Heart left ventricle (tissue), 16 donors: ENCODE measurements at regions of chr12 and their contacts with region 1.

Region 1: DNA sequence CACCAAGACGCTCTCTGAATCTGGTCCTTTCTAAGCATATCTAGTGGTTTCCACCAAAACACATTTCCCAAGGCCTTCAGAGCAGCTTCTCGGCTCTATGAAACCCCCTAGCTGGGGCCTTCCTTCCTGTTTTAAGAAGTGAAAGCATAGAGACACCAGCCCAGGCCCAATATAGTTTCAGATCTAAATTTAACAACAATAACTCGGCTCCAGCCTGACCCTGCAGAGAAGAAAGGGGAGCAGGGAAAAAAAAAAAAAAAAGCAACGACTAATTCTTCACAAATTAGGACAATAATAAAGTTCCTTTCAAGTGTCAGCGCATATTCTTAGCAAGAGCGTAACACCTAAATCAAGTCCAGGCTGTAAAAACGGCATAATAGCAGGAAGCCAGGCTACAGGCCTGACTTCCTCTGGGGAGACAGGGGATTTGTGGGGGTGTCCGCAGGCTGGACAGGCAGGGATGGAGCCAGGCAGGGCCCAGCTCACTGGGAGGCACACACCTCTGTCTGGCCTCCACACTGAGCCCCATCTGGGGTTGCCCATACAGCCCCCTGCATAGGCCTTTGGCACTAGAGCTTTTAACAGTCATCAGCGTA is 773.1 kb downstream of the MED13L start:
- DNase-seq: peak in 4 of 5 donors; percentile 34 to 55 (median 46)
- ATAC-seq: peak; percentile 36 to 82 (median 64)
- H3K4me3 ChIP-seq: no peak overlapping the region
- H3K27ac ChIP-seq: peak overlapping the region in 11 of 12 donors; percentile 41 to 84 (median 71)
- H3K4me1 ChIP-seq: peaks cover 0 to 48% (median 25%) of the 10 kb centered on the region in 12 donors
- H3K27me3 ChIP-seq: no peaks in the 10 kb centered on the region
- CTCF ChIP-seq: peak in 1 of 12 donors; percentile 21
- POLR2A ChIP-seq: no peak

Region 2: GRCh38 chr12:115437061-115437567 is 67.3 kb before region 1 on chr12:
- intact Hi-C with region 1: loop called in 2 of 10 experiments (anchors 5 kb)
- DNase-seq: peak in 4 of 5 donors; percentile 34 to 74 (median 67)
- ATAC-seq: peak in 3 of 4 donors; percentile 53 to 69 (median 64)
- H3K4me3 ChIP-seq: no peak overlapping the region
- H3K27ac ChIP-seq: peak overlapping the region in 10 of 12 donors; percentile 0 to 69 (median 40)
- H3K4me1 ChIP-seq: peaks cover 0 to 31% (median 10%) of the 10 kb centered on the region in 12 donors
- H3K27me3 ChIP-seq: no peaks in the 10 kb centered on the region
- CTCF ChIP-seq: no peak
- POLR2A ChIP-seq: no peak

Region 3: DNA sequence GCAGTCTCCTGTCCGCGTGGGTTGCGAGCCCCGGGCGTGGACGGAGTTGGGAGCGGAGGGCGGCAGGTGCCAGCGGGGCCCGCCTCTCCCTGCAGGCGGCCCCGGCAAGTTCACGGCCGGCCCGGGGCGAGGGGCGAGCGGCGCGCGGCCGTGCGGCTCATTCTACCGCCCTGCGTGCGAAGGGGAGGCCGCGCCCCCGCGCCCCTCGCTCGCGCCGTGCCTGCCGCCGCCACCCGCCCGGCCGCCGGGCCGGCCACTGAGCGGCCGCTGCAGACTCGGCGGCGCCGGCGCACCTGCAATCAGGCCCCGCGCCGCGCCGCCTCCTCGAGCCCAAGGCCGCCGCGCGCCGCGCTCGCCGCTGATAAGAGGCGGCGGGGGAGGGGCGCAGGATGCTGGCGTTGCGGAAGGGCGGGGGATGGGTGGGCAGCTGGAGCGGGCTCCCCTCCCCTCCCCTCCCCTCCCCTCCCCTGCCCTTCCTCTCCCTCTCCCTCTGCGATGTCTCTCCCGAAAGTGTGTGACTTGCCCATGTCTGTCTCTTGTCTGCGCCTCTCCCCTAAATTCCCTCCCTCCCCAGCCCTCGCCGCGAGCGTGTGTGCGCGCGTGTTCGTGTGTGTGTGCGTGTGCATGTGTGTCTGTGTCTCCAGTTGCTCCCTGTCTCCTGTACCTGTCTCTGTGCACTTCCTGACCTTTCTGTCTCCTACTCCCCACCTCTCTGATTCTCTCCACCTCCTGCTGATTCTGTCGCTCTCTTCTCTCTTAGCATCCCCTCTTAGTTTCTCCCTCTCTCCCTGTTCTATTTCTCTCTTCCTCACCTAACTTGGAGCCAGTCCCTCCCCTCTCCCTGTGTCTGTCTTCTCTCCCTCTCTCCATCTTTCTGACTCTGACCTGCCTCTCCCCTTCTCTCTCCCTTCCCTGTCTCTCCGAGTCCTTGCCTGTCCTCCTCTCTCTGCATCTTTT is 52.3 kb before region 1 on chr12:
- intact Hi-C with region 1: loop called in 3 of 10 experiments (anchors 5 kb)
- DNase-seq: peak; percentile 61 to 71 (median 70)
- ATAC-seq: peak in 3 of 4 donors; percentile 65 to 78 (median 73)
- H3K4me3 ChIP-seq: peak overlapping the region in 10 of 12 donors; percentile 21 to 54 (median 38)
- H3K27ac ChIP-seq: peak overlapping the region in 9 of 12 donors; percentile 16 to 85 (median 66)
- H3K4me1 ChIP-seq: peaks cover 0 to 30% (median 8%) of the 10 kb centered on the region in 12 donors
- H3K27me3 ChIP-seq: peaks cover 0 to 13% (median 0%) of the 10 kb centered on the region in 9 donors
- CTCF ChIP-seq: no peak
- POLR2A ChIP-seq: no peak

Region 4: DNA sequence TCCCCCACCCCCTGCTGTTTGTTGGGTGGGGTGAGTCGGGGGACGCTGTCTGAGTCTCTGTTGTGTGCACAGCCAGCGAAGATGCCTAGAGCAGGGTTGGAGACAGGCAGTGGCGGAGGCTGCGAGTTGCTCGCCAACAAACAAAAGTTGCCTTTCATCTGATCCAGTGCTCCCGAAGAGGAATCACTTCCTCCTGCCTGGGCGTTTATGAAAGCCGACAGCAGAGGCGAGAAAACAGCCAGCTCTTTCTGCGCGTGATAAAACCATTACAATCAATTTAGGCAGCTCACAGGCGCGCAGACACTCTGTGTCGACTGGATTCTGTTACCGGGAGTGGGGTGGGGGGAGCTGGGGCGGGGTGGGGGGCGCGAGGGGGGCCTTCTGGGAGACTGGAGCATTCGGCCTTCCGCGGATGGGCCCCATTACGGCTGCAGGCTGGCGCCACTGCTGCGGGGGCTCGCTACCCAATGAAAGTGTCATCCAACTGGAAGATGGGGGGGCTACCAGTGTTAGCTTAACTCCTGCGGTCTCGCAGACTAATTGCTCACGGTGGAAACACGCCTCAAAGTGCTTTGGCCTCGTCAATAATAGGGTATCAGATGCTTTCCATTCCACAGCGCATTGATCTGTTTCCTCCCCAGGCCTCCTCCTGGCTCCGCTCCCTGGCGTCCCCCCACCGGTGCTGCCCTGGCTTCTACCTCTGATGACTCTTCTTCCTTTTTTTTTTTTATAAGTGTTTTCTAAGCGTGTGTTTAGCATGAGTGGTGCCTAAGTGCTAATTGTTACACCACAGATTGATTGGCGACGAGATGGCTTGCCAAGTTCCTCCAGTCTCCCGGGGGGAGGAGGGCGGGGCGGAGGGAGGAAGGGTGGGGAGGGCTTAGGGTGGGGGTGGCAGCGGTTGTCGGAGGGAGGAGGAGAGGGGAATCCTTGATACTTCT is 94.7 kb after region 1 on chr12:
- intact Hi-C with region 1: loop called in 3 of 10 experiments (anchors 2 to 10 kb)
- DNase-seq: peak; percentile 36 to 67 (median 63)
- ATAC-seq: peak; percentile 42 to 88 (median 60)
- H3K4me3 ChIP-seq: peak overlapping the region in 6 of 12 donors; percentile 10 to 32 (median 26)
- H3K27ac ChIP-seq: peak overlapping the region in 10 of 12 donors; percentile 26 to 68 (median 48)
- H3K4me1 ChIP-seq: peaks cover 0 to 18% (median 7%) of the 10 kb centered on the region in 12 donors
- H3K27me3 ChIP-seq: peaks cover 0 to 25% (median 4%) of the 10 kb centered on the region in 9 donors
- CTCF ChIP-seq: no peak
- POLR2A ChIP-seq: no peak

Region 5: DNA sequence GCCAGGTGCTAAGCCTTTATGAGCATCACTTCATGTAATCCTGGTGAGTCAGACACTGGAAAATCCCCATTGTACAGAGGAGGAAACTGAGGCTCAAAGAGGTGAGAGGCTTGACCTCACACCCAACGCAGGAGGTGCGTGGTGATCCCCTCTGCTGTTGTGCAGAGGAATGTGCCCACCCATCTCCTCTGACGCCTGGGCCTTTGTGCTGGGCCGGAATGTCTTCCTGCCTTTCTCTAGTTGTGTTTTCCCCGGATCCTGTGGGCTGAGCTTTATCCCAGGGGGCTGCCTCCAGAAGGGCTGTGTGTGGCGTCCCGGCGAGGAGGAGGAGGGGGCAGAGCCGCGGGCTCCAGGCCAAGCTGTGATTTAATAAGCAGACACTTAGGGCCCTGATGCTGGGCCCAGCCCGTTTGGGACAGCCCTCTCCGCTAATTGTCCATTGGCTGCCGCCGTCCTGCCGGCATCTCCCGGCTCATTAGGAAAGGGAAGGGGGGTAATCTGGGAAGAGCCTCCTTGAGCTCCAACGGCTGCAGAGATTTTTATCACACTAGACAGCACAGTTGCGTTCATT is 119.4 kb after region 1 on chr12:
- intact Hi-C with region 1: loop called in 4 of 10 experiments (anchors 2 to 10 kb)
- DNase-seq: peak; percentile 81 to 88 (median 86)
- ATAC-seq: peak; percentile 87 to 97 (median 88)
- H3K4me3 ChIP-seq: no peak overlapping the region
- H3K27ac ChIP-seq: peak overlapping the region in 7 of 12 donors; percentile 24 to 70 (median 56)
- H3K4me1 ChIP-seq: peaks cover 0 to 11% (median 0%) of the 10 kb centered on the region in 12 donors
- H3K27me3 ChIP-seq: peaks cover 0 to 5% (median 0%) of the 10 kb centered on the region in 9 donors
- CTCF ChIP-seq: no peak
- POLR2A ChIP-seq: no peak